ENCODE measurements at regions of chr1 and their contacts with region 1.

Region 1: DNA sequence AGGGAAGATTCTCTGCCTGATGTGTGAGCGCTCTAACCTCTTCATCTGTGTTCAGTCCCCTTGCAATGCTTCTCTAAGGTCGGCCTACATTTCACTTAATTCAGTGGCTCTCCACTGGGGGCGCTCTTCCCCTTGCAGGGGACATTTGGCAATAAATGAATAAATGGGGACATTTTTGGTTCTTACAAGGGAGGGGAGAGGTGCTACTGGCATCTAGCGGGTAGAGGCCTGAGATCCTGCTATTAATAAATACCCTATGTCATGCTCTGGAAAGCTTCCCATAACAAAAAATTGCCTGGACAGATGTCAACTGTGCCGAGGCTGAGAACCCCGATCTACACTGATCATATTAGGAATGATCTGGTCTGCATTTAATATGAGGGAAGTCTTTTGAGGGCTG is 25.9 kb upstream of the DNAJC11 start:
- DNase-seq: peak; percentile 71 to 83 (median 78)
- ATAC-seq: peak; percentile 88
- H3K4me3 ChIP-seq: no peak overlapping the region
- H3K27ac ChIP-seq: no peak overlapping the region
- H3K4me1 ChIP-seq: 0 out of 5 replicates have a peak, but pooled peaks cover 0 to 3% of the 10 kb centered on the region in 2 experiments
- H3K27me3 ChIP-seq: peaks cover 31 to 51% of the 10 kb centered on the region in 2 experiments; a peak in 4 of 5 replicates
- CTCF ChIP-seq: peak; percentile 91 to 96 (median 96)
- EP300 ChIP-seq: no peak
- POLR2A ChIP-seq: no peak
- RAD21 ChIP-seq: peak; percentile 56 to 79

Region 2: GRCh38 chr1:6658359-6659060 is 69.0 kb before region 1 on chr1:
- CTCF ChIA-PET with region 1: no interaction called
- POLR2A ChIA-PET with region 1: no interaction called
- in situ Hi-C with region 1: no loop called
- intact Hi-C with region 1: loop called (anchors 2 kb)
- DNase-seq: no peak
- ATAC-seq: no peak
- H3K4me3 ChIP-seq: no peak overlapping the region
- H3K27ac ChIP-seq: no peak overlapping the region
- H3K4me1 ChIP-seq: no peaks in the 10 kb centered on the region
- H3K27me3 ChIP-seq: no peaks in the 10 kb centered on the region
- CTCF ChIP-seq: no peak
- EP300 ChIP-seq: no peak
- POLR2A ChIP-seq: no peak
- RAD21 ChIP-seq: no peak

Region 3: DNA sequence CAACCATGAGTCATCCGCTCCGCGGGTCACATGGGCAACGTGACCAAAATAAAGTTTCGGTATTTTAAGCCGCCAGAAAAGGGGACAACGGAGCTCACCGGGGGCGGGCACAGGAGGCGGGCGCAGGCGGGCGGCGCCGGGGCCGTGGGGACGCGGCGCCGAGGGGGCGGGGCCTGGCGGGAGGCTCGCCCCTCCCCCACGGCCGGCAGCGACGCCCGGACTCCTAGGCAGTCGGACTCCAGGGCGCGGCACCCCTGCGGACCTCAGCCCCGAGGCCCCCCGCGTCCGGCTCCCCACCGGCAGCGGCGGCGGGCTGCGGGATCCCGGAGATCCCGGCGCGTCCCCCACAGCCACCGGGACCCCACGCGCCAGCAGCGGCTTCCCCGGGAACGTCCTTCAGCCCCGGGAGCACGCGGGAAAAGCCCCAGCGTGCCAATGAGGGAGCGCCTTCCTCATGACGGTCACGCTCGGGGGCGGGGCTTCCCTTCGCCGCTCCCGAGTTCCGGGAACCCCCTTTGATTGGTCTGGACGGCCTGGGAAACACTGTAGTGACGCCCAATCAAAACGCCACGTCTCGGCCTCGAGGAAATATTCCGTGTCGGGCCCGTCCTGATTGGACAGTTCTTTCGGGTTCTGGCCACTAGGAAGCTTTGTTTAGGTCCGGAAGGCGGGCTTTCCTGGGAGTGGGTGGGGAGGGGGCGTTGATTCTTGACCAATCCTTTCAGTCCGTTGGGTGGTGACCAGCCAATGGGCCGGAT is 57.2 kb after region 1 on chr1:
- CTCF ChIA-PET with region 1: interaction called, 4 read pairs
- POLR2A ChIA-PET with region 1: interaction called, 3 read pairs
- in situ Hi-C with region 1: no loop called
- intact Hi-C with region 1: loop called (anchors 5 kb)
- DNase-seq: peak; percentile 99 to 100 (median 100)
- ATAC-seq: peak; percentile 94
- H3K4me3 ChIP-seq: peak overlapping the region; percentile 96
- H3K27ac ChIP-seq: peak overlapping the region; percentile 97
- H3K4me1 ChIP-seq: peaks cover 13 to 23% of the 10 kb centered on the region in 2 experiments; a peak in 4 of 5 replicates
- H3K27me3 ChIP-seq: no peaks in the 10 kb centered on the region
- CTCF ChIP-seq: no peak
- EP300 ChIP-seq: no peak
- POLR2A ChIP-seq: peak; percentile 94
- RAD21 ChIP-seq: no peak

Region 4: DNA sequence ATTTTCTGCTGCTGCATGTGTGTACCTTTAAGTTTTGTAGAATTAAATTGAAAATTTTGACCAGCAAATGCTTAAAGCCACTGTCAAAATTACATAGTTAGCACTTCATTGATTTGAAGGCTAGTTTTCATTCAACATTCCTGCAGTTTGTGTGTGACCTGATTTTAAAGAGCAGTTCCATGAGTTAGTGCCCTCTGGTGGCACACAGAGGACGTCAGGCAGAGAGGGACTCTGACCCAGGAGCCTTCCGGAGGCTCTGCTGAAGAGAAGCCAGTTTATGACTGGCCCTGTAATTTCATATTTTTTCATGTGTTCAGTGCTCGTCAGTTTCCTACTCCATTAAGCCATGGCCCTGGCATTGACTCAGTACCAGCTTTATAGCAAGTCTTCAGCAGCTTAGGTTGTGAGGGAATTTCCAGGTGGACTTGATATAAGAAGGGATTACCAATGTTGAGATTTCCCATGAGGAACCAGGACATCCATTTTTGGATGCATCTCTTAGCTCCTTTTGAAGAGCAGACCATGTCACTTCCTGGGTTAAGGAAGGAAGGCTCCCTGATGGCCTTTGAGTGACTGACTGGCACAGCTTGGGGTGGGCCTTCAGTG is 162.4 kb after region 1 on chr1:
- CTCF ChIA-PET with region 1: interaction called, 16 read pairs
- POLR2A ChIA-PET with region 1: no interaction called
- in situ Hi-C with region 1: loop called (anchors 10 kb)
- intact Hi-C with region 1: loop called (anchors 1 kb)
- DNase-seq: peak; percentile 50 to 73 (median 58)
- ATAC-seq: peak; percentile 98
- H3K4me3 ChIP-seq: no peak overlapping the region
- H3K27ac ChIP-seq: no peak overlapping the region
- H3K4me1 ChIP-seq: no peaks in the 10 kb centered on the region
- H3K27me3 ChIP-seq: peaks cover 0 to 1% of the 10 kb centered on the region in 2 experiments; a peak in 2 of 5 replicates
- CTCF ChIP-seq: peak; percentile 84 to 92 (median 89)
- EP300 ChIP-seq: no peak
- POLR2A ChIP-seq: no peak
- RAD21 ChIP-seq: peak; percentile 66 to 86

Region 5: GRCh38 chr1:7070389-7071029 is 343.0 kb after region 1 on chr1:
- CTCF ChIA-PET with region 1: no interaction called
- POLR2A ChIA-PET with region 1: no interaction called
- in situ Hi-C with region 1: no loop called
- intact Hi-C with region 1: loop called (anchors 10 kb)
- DNase-seq: peak; percentile 64 to 74 (median 68)
- ATAC-seq: peak; percentile 96
- H3K4me3 ChIP-seq: no peak overlapping the region
- H3K27ac ChIP-seq: no peak overlapping the region
- H3K4me1 ChIP-seq: peaks cover 0 to 3% of the 10 kb centered on the region in 2 experiments; a peak in 1 of 5 replicates
- H3K27me3 ChIP-seq: peaks cover 12 to 26% of the 10 kb centered on the region in 2 experiments; a peak in 4 of 5 replicates
- CTCF ChIP-seq: peak; percentile 86 to 90 (median 86)
- EP300 ChIP-seq: no peak
- POLR2A ChIP-seq: no peak
- RAD21 ChIP-seq: peak in 1 of 2 experiments; percentile 79; a peak in 3 of 4 replicates

Region 6: GRCh38 chr1:7224644-7225043 is 497.1 kb after region 1 on chr1:
- CTCF ChIA-PET with region 1: no interaction called
- POLR2A ChIA-PET with region 1: no interaction called
- in situ Hi-C with region 1: loop called (anchors 10 kb)
- intact Hi-C with region 1: no loop called
- DNase-seq: peak in 1 of 4 experiments; percentile 28
- ATAC-seq: peak; percentile 57; the same call in 2 of the 3 replicates
- H3K4me3 ChIP-seq: no peak overlapping the region
- H3K27ac ChIP-seq: no peak overlapping the region
- H3K4me1 ChIP-seq: no peaks in the 10 kb centered on the region
- H3K27me3 ChIP-seq: peaks cover 8 to 60% of the 10 kb centered on the region in 2 experiments; a peak in 4 of 5 replicates
- CTCF ChIP-seq: peak; percentile 29 to 39 (median 39); a peak in 4 of 6 replicates
- EP300 ChIP-seq: no peak
- POLR2A ChIP-seq: no peak
- RAD21 ChIP-seq: peak in 1 of 2 experiments; percentile 36; a peak in 2 of 4 replicates